Sigmoid colon (tissue), 7 donors: ENCODE measurements at regions of chr17 and their contacts with region 1.

Region 1: DNA sequence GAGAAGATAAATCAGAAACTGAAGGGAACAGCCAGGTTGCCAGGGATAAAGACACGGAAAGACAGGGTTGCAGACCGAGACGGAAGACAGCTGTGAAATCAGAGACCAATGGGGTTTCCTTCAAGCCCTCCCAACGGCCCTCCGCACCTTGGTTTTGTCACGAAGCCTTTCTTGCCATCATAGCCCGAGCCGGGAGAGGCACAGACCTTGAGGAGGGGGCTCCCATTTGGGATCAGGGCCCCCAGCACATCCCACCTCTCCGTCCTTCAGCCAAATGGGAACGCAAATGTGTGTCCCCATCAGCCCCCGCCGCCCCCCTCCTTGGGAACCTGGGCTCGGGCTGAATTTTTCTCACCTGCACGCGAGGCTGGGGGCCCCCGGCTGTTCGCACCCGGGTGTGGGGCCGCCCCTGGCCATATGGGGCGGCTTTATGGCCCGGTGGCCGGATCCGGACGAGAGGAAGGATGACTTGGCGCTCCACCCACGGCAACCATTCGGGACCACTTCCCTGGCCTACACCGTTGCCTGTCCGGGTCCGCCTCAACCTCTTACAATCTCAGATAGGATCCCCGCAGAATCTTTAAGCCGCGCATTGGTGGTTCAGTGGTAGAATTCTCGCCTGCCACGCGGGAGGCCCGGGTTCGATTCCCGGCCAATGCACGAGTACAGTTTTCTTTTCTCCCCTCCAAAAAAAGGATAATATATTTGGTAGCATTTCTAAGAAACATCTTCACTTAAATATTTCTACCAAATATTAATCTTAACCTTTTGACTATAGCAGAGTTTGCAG is 1.4 kb upstream of the HES7 start:
- DNase-seq: peak; percentile 92
- H3K4me3 ChIP-seq: peak overlapping the region; percentile 36 to 77 (median 58)
- H3K27ac ChIP-seq: peak overlapping the region; percentile 72 to 76 (median 74)
- H3K4me1 ChIP-seq: peaks cover 0 to 71% (median 67%) of the 10 kb centered on the region in 4 donors
- H3K27me3 ChIP-seq: peaks cover 12 to 61% (median 51%) of the 10 kb centered on the region in 3 donors
- CTCF ChIP-seq: no peak
- EP300 ChIP-seq: no peak
- POLR2A ChIP-seq: no peak

Region 2: GRCh38 chr17:8079291-8080207 is 45.8 kb before region 1 on chr17:
- intact Hi-C with region 1: no loop called
- DNase-seq: peak; percentile 83
- H3K4me3 ChIP-seq: peak overlapping the region in 3 of 4 donors; percentile 36 to 45 (median 40)
- H3K27ac ChIP-seq: peak overlapping the region in 1 of 4 donors; percentile 18
- H3K4me1 ChIP-seq: peaks cover 0 to 15% (median 11%) of the 10 kb centered on the region in 4 donors
- H3K27me3 ChIP-seq: peaks cover 6 to 95% (median 55%) of the 10 kb centered on the region in 3 donors
- CTCF ChIP-seq: peak; percentile 47 to 95 (median 68)
- EP300 ChIP-seq: no peak
- POLR2A ChIP-seq: no peak

Region 3: DNA sequence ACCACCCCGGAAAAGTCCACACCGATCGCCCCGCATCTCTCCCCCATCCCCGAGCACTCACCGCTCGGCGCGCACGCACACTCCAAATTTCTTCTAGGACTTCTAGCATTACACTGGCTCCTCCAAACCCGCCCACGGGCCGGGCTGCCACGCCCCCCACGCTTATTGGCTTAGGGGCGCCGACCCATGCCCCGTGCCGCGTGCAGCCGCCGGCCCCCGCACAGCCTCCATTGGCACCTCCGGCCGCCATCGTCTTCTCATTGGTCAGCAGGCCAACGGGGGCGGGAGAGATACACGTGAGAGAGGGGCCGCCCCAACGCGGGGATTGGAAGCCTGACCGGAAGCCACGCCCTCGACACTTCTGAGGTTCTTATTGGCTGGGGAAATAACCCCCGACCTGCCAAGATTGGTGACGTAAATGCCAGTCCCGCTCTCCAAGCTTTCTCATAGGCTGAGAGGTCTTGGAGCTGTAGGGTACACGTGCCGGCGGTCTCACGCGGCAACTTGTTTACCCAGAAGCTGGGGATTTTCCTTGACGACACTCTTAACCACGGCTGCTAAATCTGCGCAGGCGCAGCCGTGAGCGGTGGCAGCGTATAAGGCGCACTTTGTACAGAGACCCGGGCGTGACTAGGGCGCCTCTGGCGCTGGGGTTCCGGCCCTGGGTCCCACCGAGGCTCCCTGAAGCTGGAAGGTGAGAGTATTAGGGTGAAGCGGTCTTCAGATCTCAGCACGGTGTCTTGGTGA is 31.1 kb after region 1 on chr17:
- intact Hi-C with region 1: loop called (anchors 2 kb)
- DNase-seq: peak; percentile 100
- H3K4me3 ChIP-seq: peak overlapping the region; percentile 93 to 97 (median 96)
- H3K27ac ChIP-seq: peak overlapping the region; percentile 99 to 100 (median 100)
- H3K4me1 ChIP-seq: peaks cover 0 to 58% (median 54%) of the 10 kb centered on the region in 4 donors
- H3K27me3 ChIP-seq: no peaks in the 10 kb centered on the region
- CTCF ChIP-seq: no peak
- EP300 ChIP-seq: peak; percentile 59 to 98 (median 77)
- POLR2A ChIP-seq: peak; percentile 100